Activated naive CD4-positive, alpha-beta T cell treated with anti-CD3 and anti-CD28 coated beads for 36 hours (primary cell): ENCODE measurements at regions of chr6 and their contacts with region 1.

Region 1: GRCh38 chr6:125790358-125791150 is at the start of gene NCOA7:
- DNase-seq: peak; percentile 81
- H3K4me3 Mint-ChIP-seq: peak within 1 kb of the TSS; percentile 90
- H3K27ac Mint-ChIP-seq: peak within 1 kb of the TSS; percentile 96
- H3K4me1 Mint-ChIP-seq: peaks cover 51% of the 10 kb centered on the region
- H3K27me3 Mint-ChIP-seq: no peaks in the 10 kb centered on the region
- total RNA-seq, gene NCOA7: 39.2 to 43.1 TPM

Region 2: GRCh38 chr6:124961777-124962611 is 828.6 kb before region 1 on chr6 and contains the start of gene RNF217:
- CTCF ChIA-PET with region 1: no interaction called
- intact Hi-C with region 1: loop called (anchors 5 kb)
- DNase-seq: peak; percentile 33
- H3K4me3 Mint-ChIP-seq: peak within 1 kb of the TSS; percentile 81
- H3K27ac Mint-ChIP-seq: no peak within 1 kb of the TSS
- H3K4me1 Mint-ChIP-seq: peaks cover 41% of the 10 kb centered on the region
- H3K27me3 Mint-ChIP-seq: peaks cover 52% of the 10 kb centered on the region
- total RNA-seq, gene RNF217: 1.8 to 2.4 TPM

Region 3: DNA sequence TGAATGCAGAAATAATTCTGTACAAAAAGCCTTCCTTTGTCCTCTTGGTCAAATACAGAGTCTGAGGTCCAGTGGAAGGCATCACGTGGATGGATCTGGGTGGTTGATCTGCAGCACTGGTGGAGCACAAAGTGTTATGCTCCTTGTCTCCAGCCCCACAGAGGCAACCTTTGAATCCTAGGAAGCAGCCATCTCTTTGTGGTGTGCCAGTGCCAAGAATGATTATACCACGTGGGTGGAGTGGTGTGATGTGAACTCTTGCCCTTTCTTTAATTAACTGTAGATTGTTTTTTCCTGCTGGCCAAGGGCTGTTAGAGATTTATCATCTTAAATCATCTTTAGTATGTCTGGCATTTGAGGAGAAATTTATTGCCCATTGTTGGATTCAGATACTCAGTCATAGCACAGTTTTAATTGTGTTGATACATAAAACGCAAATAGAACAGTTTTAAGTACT is 31.3 kb after region 1 on chr6:
- CTCF ChIA-PET with region 1: no interaction called
- intact Hi-C with region 1: no loop called
- DNase-seq: no peak
- H3K4me3 Mint-ChIP-seq: no peak overlapping the region
- H3K27ac Mint-ChIP-seq: no peak overlapping the region
- H3K4me1 Mint-ChIP-seq: peaks cover 25% of the 10 kb centered on the region
- H3K27me3 Mint-ChIP-seq: no peaks in the 10 kb centered on the region

Region 4: GRCh38 chr6:125834348-125834747 is 43.8 kb after region 1 on chr6:
- CTCF ChIA-PET with region 1: no interaction called
- intact Hi-C with region 1: loop called (anchors 1 kb)
- DNase-seq: no peak
- H3K4me3 Mint-ChIP-seq: no peak overlapping the region
- H3K27ac Mint-ChIP-seq: no peak overlapping the region
- H3K4me1 Mint-ChIP-seq: peaks cover 34% of the 10 kb centered on the region
- H3K27me3 Mint-ChIP-seq: no peaks in the 10 kb centered on the region

Region 5: GRCh38 chr6:125888989-125889656 is 98.6 kb after region 1 on chr6:
- CTCF ChIA-PET with region 1: interaction called, 5 read pairs
- intact Hi-C with region 1: loop called (anchors 1 kb)
- DNase-seq: peak; percentile 37
- H3K4me3 Mint-ChIP-seq: no peak overlapping the region
- H3K27ac Mint-ChIP-seq: no peak overlapping the region
- H3K4me1 Mint-ChIP-seq: no peaks in the 10 kb centered on the region
- H3K27me3 Mint-ChIP-seq: no peaks in the 10 kb centered on the region

Region 6: DNA sequence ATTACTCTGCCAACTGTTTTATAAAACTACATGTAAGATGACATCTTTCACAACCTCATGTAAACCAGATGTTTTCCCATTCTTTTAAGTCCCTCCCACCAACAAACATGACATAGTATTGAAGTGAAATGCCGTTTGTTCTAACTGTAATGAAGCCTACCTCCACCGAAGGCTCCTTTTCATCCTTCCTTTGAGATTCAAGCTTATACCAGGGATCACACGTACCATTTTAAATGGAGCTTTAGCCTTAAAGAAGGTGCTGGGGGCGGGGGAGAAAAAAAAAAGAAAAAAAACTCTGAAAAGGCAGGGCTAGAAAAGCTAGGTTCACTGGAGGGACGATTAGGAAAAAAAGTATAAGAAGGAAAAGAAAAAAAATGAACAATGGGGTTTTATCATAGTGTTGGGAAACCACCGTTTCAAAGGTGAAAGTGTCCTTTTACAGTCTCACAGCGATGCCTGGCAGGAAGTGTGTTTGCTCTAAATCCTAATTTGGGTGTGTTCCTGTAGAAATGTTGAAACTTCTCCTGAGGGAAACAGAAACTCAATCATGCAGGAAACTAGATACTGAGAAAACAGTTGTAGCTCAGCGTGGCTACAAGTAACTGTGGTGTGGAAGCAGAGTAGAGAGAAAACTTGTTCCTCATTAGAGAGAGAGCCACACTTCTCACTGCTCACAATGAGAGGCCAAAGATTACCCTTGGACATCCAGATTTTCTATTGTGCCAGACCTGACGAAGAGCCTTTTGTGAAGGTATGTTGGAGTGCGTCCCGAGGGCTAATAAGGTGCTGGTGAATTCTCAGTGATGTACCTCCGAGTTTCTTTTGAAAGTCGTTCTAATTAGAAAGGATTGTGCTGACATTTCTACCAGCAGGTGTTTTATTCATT is 128.4 kb after region 1 on chr6:
- CTCF ChIA-PET with region 1: interaction called, 24 read pairs
- intact Hi-C with region 1: loop called (anchors 1 kb)
- DNase-seq: peak; percentile 73
- H3K4me3 Mint-ChIP-seq: peak overlapping the region; percentile 78
- H3K27ac Mint-ChIP-seq: peak overlapping the region; percentile 94
- H3K4me1 Mint-ChIP-seq: peaks cover 33% of the 10 kb centered on the region
- H3K27me3 Mint-ChIP-seq: no peaks in the 10 kb centered on the region

Region 7: DNA sequence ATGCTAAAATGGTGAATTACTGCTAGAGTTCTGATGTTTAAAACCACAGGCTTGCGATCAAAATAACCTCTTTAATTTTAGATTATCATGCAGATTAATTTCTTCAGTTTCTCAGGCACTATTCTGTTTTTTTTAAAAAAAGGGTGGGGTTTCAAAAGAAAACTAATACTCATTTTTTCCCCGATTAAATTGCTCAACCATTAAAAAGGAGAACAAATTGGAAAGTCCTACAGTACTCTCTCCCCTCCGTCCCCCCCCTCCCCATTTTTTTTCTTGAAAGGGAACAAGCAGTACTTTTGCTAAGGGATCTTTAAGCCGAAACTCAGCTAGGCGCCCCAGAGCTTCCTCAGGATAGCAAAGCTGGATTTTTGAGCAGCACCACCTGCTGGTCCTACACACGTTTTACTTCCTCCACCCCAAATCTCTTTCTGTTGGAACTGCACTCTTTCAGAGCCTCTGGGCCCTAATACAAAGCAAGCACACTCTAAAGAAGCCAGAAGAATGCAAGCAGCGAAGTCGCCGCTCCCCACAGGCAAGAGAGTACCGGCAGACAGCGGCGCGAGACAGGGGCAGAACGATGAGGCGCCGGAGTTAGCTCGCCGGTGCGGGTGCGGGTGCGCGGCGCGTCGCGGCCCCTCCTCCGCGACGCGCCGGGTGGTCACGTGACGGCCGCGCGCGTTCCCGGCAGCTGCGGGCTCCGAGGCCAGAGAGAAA is 1475.8 kb after region 1 on chr6 and contains the start of gene RNF146:
- CTCF ChIA-PET with region 1: no interaction called
- intact Hi-C with region 1: loop called (anchors 5 kb)
- DNase-seq: peak; percentile 74
- H3K4me3 Mint-ChIP-seq: peak within 1 kb of the TSS; percentile 100
- H3K27ac Mint-ChIP-seq: peak within 1 kb of the TSS; percentile 100
- H3K4me1 Mint-ChIP-seq: peaks cover 25% of the 10 kb centered on the region
- H3K27me3 Mint-ChIP-seq: no peaks in the 10 kb centered on the region
- total RNA-seq, gene RNF146: 9.7 to 10.8 TPM